Activated T-helper 2 cell treated with anti-CD3 and anti-CD28 coated beads, Interferon-gamma antibody, Interleukin-2, Interleukin-4, amounts not matched to agents 10 μg/mL and 5 μg/mL and 100 μg/mL, durations not matched to agents 14 hours and 24 hours and 36 hours (primary cell): ENCODE measurements at regions of chr10 and their contacts with region 1.

Region 1: GRCh38 chr10:62858364-62858763 is 42.2 kb upstream of the EGR2 start:
- DNase-seq: no peak
- H3K4me3 Mint-ChIP-seq: no peak overlapping the region
- H3K27ac Mint-ChIP-seq: no peak overlapping the region
- H3K4me1 Mint-ChIP-seq: peaks cover 78% of the 10 kb centered on the region
- H3K27me3 Mint-ChIP-seq: no peaks in the 10 kb centered on the region

Region 2: GRCh38 chr10:62528441-62528840 is 329.9 kb before region 1 on chr10:
- intact Hi-C with region 1: loop called (anchors 2 kb)
- DNase-seq: no peak
- H3K4me3 Mint-ChIP-seq: peak overlapping the region; percentile 1
- H3K27ac Mint-ChIP-seq: peak overlapping the region; percentile 23
- H3K4me1 Mint-ChIP-seq: peaks cover 33% of the 10 kb centered on the region
- H3K27me3 Mint-ChIP-seq: peaks cover 14% of the 10 kb centered on the region

Region 3: DNA sequence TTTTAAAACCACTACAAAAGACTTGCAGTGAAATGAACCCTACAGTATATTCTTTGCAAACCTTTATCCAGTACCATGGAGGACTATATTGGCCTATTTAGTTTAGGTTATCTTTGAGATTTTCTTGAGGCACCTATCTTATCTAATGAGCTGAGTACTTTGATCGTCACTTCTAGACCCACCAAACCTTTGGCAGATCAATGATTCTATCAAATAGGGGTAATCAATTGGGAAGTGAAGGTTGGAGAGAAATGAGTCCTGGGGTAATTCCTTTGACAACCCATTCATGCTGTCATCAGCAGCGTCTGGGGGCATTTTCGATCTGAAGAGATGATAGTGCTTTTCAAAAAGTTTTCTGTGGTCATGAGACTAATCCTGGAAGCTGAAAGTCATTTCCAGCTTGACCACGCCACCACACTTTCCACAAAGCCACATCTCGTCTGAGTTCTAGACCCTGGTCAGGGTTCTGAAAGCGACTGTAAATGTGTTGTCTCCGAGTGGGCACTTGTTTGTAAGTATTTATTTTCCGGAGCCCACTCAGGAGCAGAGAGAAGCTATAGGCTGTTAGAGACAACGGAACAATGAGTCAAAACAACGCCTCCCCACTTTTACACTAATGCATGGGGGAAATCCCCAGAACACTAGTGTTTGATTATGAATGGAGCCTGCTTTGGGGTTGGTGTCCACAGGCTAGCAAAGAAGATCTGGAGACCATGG is 47.0 kb before region 1 on chr10:
- intact Hi-C with region 1: loop called (anchors 1 kb)
- DNase-seq: peak; percentile 58
- H3K4me3 Mint-ChIP-seq: peak overlapping the region; percentile 97
- H3K27ac Mint-ChIP-seq: peak overlapping the region; percentile 83
- H3K4me1 Mint-ChIP-seq: peaks cover 67% of the 10 kb centered on the region
- H3K27me3 Mint-ChIP-seq: peaks cover 2% of the 10 kb centered on the region

Region 4: GRCh38 chr10:62903828-62904227 is 45.5 kb after region 1 on chr10:
- intact Hi-C with region 1: loop called (anchors 2 kb)
- DNase-seq: no peak
- H3K4me3 Mint-ChIP-seq: no peak overlapping the region
- H3K27ac Mint-ChIP-seq: peak overlapping the region; percentile 34
- H3K4me1 Mint-ChIP-seq: peaks cover 25% of the 10 kb centered on the region
- H3K27me3 Mint-ChIP-seq: peaks cover 2% of the 10 kb centered on the region

Region 5: DNA sequence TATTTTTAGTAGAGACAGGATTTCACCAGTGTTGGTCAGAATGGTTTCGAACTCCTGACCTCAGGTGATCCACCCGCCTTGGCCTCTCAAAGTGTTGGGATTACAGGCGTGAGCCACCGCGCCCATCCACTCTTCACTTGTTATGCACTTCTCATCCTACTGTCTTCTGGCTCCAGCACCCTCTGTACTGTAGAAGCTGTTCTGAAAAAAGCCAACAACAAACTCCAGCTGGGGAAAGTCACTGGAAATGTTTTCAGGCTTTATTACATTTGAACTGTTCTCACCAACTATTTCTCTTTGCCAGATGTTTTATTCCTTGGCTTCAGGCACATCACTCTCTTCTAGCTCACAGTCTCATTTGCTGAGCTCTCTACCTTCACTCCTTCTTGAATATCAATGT is 80.3 kb after region 1 on chr10:
- intact Hi-C with region 1: no loop called
- DNase-seq: no peak
- H3K4me3 Mint-ChIP-seq: no peak overlapping the region
- H3K27ac Mint-ChIP-seq: no peak overlapping the region
- H3K4me1 Mint-ChIP-seq: peaks cover 13% of the 10 kb centered on the region
- H3K27me3 Mint-ChIP-seq: peaks cover 9% of the 10 kb centered on the region

Region 6: DNA sequence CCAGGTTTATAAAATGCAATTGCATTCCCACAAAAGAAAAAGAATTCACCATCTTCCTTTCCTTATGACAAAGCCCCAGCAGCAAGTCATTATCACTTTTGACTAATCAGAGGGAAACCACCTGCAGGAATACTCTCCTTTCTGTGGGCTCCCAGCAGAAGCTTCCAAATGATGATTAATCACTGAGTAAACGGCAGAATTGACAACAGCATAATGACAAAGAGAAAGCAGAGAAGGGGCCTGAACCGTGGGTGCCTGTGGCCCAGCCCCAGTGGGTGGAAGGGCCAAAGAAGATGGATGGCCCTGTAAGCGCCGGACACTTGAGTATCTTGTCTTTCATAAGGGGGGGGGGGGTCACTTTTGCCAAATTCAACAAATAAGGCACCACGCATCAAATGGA is 122.3 kb after region 1 on chr10:
- intact Hi-C with region 1: loop called (anchors 1 kb)
- DNase-seq: no peak
- H3K4me3 Mint-ChIP-seq: no peak overlapping the region
- H3K27ac Mint-ChIP-seq: peak overlapping the region; percentile 88
- H3K4me1 Mint-ChIP-seq: peaks cover 44% of the 10 kb centered on the region
- H3K27me3 Mint-ChIP-seq: no peaks in the 10 kb centered on the region

Region 7: GRCh38 chr10:63083904-63084689 is 225.7 kb after region 1 on chr10:
- intact Hi-C with region 1: loop called (anchors 2 kb)
- DNase-seq: peak; percentile 16
- H3K4me3 Mint-ChIP-seq: no peak overlapping the region
- H3K27ac Mint-ChIP-seq: no peak overlapping the region
- H3K4me1 Mint-ChIP-seq: peaks cover 12% of the 10 kb centered on the region
- H3K27me3 Mint-ChIP-seq: peaks cover 23% of the 10 kb centered on the region

Region 8: DNA sequence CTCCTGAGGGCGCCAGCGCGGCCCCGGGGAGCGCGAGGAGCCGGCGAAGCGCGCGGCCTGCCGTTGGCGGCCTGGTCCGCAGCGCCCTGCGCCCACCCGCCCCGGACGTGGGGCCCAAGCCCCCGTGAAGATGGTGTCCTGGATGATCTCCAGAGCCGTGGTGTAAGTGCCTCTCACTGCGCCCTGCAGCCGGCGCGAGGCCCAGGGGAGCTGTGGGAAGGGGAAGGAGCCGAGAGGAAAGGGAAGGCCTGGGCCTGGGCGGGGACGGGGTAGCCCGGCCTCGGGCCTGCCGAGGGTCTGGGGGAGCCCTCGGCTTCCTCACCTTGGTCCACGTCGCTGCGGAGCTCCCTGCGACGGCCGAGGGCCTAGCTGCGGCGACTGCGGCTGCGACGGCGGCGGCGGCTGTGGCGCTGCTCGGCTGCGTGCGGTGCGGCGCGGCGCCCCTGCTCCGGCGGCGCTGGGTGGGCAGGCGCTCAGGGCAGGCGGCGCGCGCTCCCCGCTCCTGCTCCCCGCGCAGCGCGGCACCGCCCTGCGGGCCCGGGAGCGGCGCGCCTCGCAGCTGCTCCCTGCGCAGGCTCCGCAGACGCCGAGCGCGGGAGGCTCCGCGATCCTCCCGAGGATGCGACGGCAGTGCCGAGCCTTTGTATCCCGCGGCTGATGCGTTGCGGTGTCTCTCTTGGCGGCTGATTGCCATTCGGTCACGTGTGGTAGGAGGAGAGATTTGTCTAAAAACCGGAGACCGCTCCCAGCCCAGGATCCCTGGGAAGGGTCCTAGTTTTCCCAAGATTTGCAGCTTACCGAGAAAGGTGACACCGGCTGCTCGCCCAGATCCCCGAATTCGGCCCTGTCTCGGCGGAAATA is 663.3 kb after region 1 on chr10:
- intact Hi-C with region 1: loop called (anchors 5 kb)
- DNase-seq: peak; percentile 42
- H3K4me3 Mint-ChIP-seq: peak overlapping the region; percentile 79
- H3K27ac Mint-ChIP-seq: peak overlapping the region; percentile 81
- H3K4me1 Mint-ChIP-seq: peaks cover 51% of the 10 kb centered on the region
- H3K27me3 Mint-ChIP-seq: no peaks in the 10 kb centered on the region